Mammary epithelial cell (primary cell): ENCODE measurements at regions of chr17 and their contacts with region 1.

Region 1: GRCh38 chr17:19447085-19447583 is 36.1 kb downstream of the RNF112 start:
- DNase-seq: peak; percentile 46
- H3K4me3 ChIP-seq: no peak overlapping the region
- H3K27ac ChIP-seq: no peak overlapping the region
- H3K4me1 ChIP-seq: peaks cover 6% of the 10 kb centered on the region
- H3K27me3 ChIP-seq: no peaks in the 10 kb centered on the region
- CTCF ChIP-seq: peak; percentile 75 to 84

Region 2: GRCh38 chr17:19398301-19399181 is 48.6 kb before region 1 on chr17:
- CTCF ChIA-PET with region 1: no interaction called
- dilution Hi-C with region 1: no loop called
- in situ Hi-C with region 1: no loop called
- intact Hi-C with region 1: no loop called
- DNase-seq: peak; percentile 10
- H3K4me3 ChIP-seq: no peak overlapping the region
- H3K27ac ChIP-seq: no peak overlapping the region
- H3K4me1 ChIP-seq: peaks cover 14% of the 10 kb centered on the region
- H3K27me3 ChIP-seq: no peaks in the 10 kb centered on the region
- CTCF ChIP-seq: no peak

Region 3: GRCh38 chr17:19507775-19508576 is 60.8 kb after region 1 on chr17:
- CTCF ChIA-PET with region 1: no interaction called
- dilution Hi-C with region 1: no loop called
- in situ Hi-C with region 1: no loop called
- intact Hi-C with region 1: loop called (anchors 2 kb)
- DNase-seq: peak; percentile 86
- H3K4me3 ChIP-seq: peak overlapping the region; percentile 58 to 79 (median 58)
- H3K27ac ChIP-seq: no peak overlapping the region
- H3K4me1 ChIP-seq: no peaks in the 10 kb centered on the region
- H3K27me3 ChIP-seq: no peaks in the 10 kb centered on the region
- CTCF ChIP-seq: peak in 1 of 2 donors; percentile 9